ENCODE measurements at regions of chr20 and their contacts with region 1.

Region 1: GRCh38 chr20:57346477-57346876 is 4.6 kb upstream of the RAE1 start:
- DNase-seq: peak in 2 of 3 donors; percentile 73 to 91
- ATAC-seq: peak; percentile 51
- H3K4me3 ChIP-seq: no peak overlapping the region
- H3K4me1 ChIP-seq: no peaks in the 10 kb centered on the region
- CTCF ChIP-seq: peak; percentile 45

Region 2: GRCh38 chr20:57013718-57014117 is 332.8 kb before region 1 on chr20:
- intact Hi-C with region 1: no loop called
- DNase-seq: peak in 1 of 3 donors; percentile 4
- ATAC-seq: no peak
- H3K4me3 ChIP-seq: no peak overlapping the region
- H3K4me1 ChIP-seq: no peaks in the 10 kb centered on the region
- CTCF ChIP-seq: no peak

Region 3: DNA sequence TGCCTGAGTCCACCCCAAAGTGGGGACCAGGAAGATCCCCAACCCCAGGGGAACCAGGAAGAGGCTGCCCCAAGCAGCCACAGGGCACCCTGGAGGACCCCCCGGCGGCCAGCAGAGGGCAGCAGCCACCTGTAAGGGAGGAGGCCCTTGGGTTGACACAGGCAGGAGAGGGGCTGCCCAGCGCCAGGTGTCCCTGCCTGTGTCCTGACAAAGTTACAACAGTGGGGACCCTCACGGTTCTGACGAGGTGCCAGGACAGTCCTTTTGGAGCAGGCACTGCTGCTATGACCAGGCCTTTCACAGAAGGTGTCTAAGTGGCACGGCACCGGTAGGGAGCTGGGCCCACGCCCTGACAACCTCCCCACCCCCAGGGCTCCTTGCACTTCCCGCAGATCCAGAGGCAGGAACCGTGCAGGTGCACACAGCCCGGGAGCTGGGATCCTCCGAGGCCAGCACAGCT is 256.8 kb before region 1 on chr20:
- intact Hi-C with region 1: loop called (anchors 2 to 5 kb)
- DNase-seq: peak; percentile 68 to 85 (median 77)
- ATAC-seq: peak; percentile 84
- H3K4me3 ChIP-seq: no peak overlapping the region
- H3K4me1 ChIP-seq: no peaks in the 10 kb centered on the region
- CTCF ChIP-seq: peak; percentile 78